ENCODE measurements at regions of chr6 and their contacts with region 1.

Region 1: DNA sequence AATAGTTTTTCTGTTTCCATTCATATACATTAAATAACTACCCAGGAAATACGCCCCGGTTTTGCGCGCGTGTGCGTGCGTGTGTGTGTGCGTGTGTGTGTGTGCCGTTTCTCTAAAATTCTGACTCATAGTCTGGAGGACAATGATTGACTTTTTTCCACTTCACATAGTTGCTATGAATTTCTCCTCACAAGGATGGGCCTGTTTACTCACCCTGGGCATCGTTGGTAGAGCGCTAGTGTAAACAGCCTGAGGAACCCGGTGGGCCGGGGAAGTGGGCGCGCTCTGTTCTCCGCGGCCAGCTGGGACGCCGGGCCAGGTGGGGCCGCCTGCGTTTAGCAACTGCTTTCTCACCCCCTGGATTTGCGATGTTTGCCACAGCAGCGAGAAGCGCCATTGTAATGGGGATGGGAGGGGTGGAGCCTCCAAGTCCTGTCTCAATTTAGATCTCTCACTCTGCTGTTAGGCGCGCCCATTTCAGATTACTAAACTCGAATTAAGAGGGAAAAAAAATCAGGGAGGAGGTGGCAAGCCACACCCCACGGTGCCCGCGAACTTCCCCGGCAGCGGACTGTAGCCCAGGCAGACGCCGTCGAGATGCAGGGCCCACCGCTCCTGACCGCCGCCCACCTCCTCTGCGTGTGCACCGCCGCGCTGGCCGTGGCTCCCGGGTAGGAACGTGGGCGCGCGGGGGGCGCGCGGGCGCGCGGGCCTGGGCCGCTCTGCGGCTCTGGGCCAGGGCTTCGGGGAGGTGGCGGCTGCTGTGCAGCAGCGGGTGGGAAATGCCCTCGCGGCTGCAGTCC is at the start of gene CD109:
- DNase-seq: peak; percentile 70 to 86
- H3K4me3 ChIP-seq: peak within 1 kb of the TSS; percentile 62
- H3K27ac ChIP-seq: peak within 1 kb of the TSS; percentile 85
- H3K4me1 ChIP-seq: peaks cover 41% of the 10 kb centered on the region
- H3K27me3 ChIP-seq: no peaks in the 10 kb centered on the region
- CTCF ChIP-seq: no peak
- total RNA-seq, gene CD109: 46.8 and 50.7 TPM in 2 replicates

Region 2: GRCh38 chr6:73624896-73625295 is 70.9 kb before region 1 on chr6:
- CTCF ChIA-PET with region 1: no interaction called
- POLR2A ChIA-PET with region 1: no interaction called
- intact Hi-C with region 1: no loop called
- DNase-seq: no peak
- H3K4me3 ChIP-seq: no peak overlapping the region
- H3K27ac ChIP-seq: no peak overlapping the region
- H3K4me1 ChIP-seq: no peaks in the 10 kb centered on the region
- H3K27me3 ChIP-seq: no peaks in the 10 kb centered on the region
- CTCF ChIP-seq: no peak

Region 3: GRCh38 chr6:73722318-73723060 is 26.7 kb after region 1 on chr6:
- CTCF ChIA-PET with region 1: interaction called, 15 read pairs
- POLR2A ChIA-PET with region 1: interaction called, 6 read pairs
- intact Hi-C with region 1: no loop called
- DNase-seq: no peak
- H3K4me3 ChIP-seq: no peak overlapping the region
- H3K27ac ChIP-seq: no peak overlapping the region
- H3K4me1 ChIP-seq: no peaks in the 10 kb centered on the region
- H3K27me3 ChIP-seq: no peaks in the 10 kb centered on the region
- CTCF ChIP-seq: no peak

Region 4: DNA sequence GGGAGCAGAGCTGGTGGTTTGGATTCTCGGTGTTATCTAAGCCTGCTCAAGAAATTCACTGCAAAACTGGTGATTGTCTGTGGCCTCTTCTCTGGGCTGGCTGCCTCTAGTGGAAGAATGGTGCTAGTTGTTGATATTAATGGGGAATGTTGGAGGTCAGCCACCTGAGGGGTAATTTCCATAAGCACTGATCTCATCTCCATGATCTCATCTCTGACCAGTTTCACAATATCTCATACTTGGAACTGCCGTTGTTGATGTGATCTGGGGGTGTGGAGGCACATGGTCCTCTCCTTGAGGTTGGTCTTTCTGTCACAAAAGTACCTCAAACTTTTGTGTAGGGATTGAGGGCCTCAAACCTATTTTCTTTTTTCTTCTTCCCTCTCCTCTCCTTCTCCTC is 102.8 kb after region 1 on chr6:
- CTCF ChIA-PET with region 1: no interaction called
- POLR2A ChIA-PET with region 1: no interaction called
- intact Hi-C with region 1: no loop called
- DNase-seq: peak; percentile 27 to 76
- H3K4me3 ChIP-seq: no peak overlapping the region
- H3K27ac ChIP-seq: peak overlapping the region; percentile 33; the same call in 1 of the 2 replicates
- H3K4me1 ChIP-seq: peaks cover 16% of the 10 kb centered on the region
- H3K27me3 ChIP-seq: no peaks in the 10 kb centered on the region
- CTCF ChIP-seq: peak; percentile 53; the same call in 1 of the 2 replicates

Region 5: DNA sequence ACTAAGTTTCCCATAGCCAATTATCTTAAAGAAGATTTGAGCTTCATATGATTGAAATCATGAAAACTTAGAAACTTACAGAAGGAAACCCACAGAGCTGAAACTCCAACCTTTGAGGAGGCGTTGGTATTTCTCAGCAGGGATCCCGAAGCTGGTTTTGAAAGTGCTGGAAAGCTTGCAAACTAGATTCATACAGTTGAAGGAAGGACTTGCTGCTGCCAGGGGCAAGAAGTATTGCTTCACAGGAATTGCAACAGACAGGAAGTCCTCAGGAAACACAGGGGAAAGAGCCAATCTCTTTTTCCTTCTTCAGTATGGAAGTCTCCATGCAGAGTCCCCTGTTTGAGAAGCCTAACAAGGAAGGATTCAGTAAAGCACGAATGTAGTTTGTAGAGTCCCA is 419.9 kb after region 1 on chr6:
- CTCF ChIA-PET with region 1: no interaction called
- POLR2A ChIA-PET with region 1: no interaction called
- intact Hi-C with region 1: no loop called
- DNase-seq: no peak
- H3K4me3 ChIP-seq: no peak overlapping the region
- H3K27ac ChIP-seq: no peak overlapping the region
- H3K4me1 ChIP-seq: no peaks in the 10 kb centered on the region
- H3K27me3 ChIP-seq: no peaks in the 10 kb centered on the region
- CTCF ChIP-seq: no peak

Measured in PC-9 (cell line).